Dorsolateral prefrontal cortex (tissue), 120 donors: ENCODE measurements at regions of chr2 and their contacts with region 1.

Region 1: GRCh38 chr2:24432121-24432520 is 58.9 kb upstream of the NCOA1 start:
- DNase-seq: no peak
- H3K4me3 ChIP-seq: no peak overlapping the region
- H3K27ac ChIP-seq: no peak overlapping the region
- H3K27me3 ChIP-seq: no peaks in the 10 kb centered on the region
- CTCF ChIP-seq: no peak

Region 2: GRCh38 chr2:24452502-24452885 is 20.4 kb after region 1 on chr2:
- intact Hi-C with region 1: loop called in 1 of 2 experiments (anchors 2 kb)
- DNase-seq: no peak
- H3K4me3 ChIP-seq: peak overlapping the region in 4 of 59 donors; percentile 3 to 17 (median 12)
- H3K27ac ChIP-seq: peak overlapping the region in 1 of 59 donors; percentile 19
- H3K27me3 ChIP-seq: no peaks in the 10 kb centered on the region
- CTCF ChIP-seq: no peak

Region 3: GRCh38 chr2:24586955-24587354 is 154.8 kb after region 1 on chr2:
- intact Hi-C with region 1: no loop called
- DNase-seq: no peak
- H3K4me3 ChIP-seq: no peak overlapping the region
- H3K27ac ChIP-seq: no peak overlapping the region
- H3K27me3 ChIP-seq: no peaks in the 10 kb centered on the region
- CTCF ChIP-seq: no peak